ENCODE measurements at regions of chr2 and their contacts with region 1.

Region 1: DNA sequence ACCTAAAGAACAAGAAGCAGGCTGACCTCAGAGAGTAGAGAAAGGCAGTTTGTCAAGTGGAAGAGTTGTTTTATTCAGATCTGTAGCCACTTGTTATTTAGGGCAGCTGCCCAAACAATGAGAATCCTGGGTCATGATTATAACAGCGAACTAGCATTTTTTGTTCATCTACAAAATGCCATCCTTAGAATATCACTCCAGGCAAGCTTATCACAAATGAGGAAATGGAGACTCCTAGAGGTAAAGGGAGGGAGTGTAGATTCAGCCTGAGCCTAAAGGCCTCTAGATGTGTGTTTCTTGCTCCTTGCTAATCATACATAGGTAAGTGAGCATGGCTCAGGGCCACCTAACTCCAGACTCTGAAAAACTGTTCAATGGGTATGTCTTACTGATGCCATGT is 126.1 kb downstream of the HNMT start:
- DNase-seq: no peak
- H3K4me3 Mint-ChIP-seq: no peak overlapping the region
- H3K27ac Mint-ChIP-seq: no peak overlapping the region
- H3K4me1 Mint-ChIP-seq: no peaks in the 10 kb centered on the region
- H3K27me3 Mint-ChIP-seq: no peaks in the 10 kb centered on the region

Region 2: DNA sequence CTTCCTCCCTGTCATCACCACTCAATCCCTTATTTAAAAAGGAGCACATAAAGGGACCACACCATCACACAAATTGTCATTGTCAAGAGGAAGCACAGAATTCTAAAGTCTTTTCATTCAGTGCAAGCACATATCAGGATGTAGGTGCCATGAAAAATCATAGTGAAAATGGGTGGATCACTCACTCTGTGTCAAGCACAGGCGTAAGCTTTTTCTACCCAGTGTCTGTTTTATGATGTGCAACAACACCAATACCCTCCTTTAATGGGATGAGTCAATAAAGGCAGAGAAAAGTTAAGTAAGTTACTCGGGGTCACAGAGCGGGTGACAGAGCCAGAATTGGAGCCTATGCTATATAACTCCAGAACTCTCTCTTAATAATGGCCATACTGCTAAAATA is 348.4 kb before region 1 on chr2:
- intact Hi-C with region 1: no loop called
- DNase-seq: no peak
- H3K4me3 Mint-ChIP-seq: no peak overlapping the region
- H3K27ac Mint-ChIP-seq: no peak overlapping the region
- H3K4me1 Mint-ChIP-seq: no peaks in the 10 kb centered on the region
- H3K27me3 Mint-ChIP-seq: no peaks in the 10 kb centered on the region

Region 3: DNA sequence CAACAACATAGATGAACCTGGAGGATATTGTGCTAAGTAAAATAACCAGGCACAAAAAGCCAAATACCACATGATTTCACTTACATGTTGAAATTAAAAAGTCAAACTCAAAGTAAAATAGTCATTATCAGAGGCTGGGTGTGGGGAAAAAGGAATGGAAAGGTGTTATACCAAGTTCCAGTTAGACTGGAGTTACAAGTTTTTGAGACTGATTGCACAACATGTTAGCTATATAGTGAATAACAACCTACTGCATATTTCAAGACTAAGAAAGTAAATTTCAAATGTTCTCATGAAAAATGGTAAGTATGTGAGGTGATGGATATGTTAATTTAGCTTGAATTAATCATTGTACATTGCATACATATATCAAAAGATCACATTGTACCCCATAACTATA is 242.9 kb before region 1 on chr2:
- intact Hi-C with region 1: no loop called
- DNase-seq: no peak
- H3K4me3 Mint-ChIP-seq: no peak overlapping the region
- H3K27ac Mint-ChIP-seq: no peak overlapping the region
- H3K4me1 Mint-ChIP-seq: no peaks in the 10 kb centered on the region
- H3K27me3 Mint-ChIP-seq: no peaks in the 10 kb centered on the region

Region 4: DNA sequence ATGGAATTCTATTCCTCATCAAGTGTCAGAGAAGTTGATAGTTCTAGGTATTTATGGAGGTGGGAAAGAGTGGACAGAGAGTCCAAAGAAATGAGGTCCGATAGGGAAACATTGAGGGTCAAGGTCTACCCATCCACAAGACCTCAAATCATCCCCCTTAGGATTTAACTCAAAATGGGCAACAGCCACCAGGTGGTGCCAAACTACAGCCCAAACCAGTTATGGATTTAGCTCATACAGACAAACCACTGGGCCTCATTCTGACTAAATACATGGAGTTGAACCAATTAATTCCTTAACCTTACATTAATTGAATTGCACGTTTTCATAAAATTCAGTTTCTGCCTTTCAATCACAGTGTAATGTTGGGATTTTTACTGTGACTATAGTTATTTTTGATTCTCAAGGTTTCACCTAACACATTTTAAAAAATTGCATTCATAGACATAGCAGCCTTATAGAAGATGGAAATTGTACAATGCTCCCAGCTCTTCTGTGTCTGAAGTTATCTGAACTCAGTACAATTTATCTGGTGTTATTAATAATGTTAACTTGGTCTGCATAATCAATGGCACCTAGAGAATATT is 224.3 kb before region 1 on chr2:
- intact Hi-C with region 1: loop called (anchors 10 kb)
- DNase-seq: no peak
- H3K4me3 Mint-ChIP-seq: no peak overlapping the region
- H3K27ac Mint-ChIP-seq: no peak overlapping the region
- H3K4me1 Mint-ChIP-seq: no peaks in the 10 kb centered on the region
- H3K27me3 Mint-ChIP-seq: no peaks in the 10 kb centered on the region

Measured in activated T-helper 2 cell treated with anti-CD3 and anti-CD28 coated beads, Interferon-gamma antibody, Interleukin-2, Interleukin-4, amounts not matched to agents 10 μg/mL and 5 μg/mL and 100 μg/mL, durations not matched to agents 14 hours and 24 hours and 36 hours (primary cell).